CD8-positive, alpha-beta T cell (primary cell): ENCODE measurements at regions of chr2 and their contacts with region 1.

Region 1: DNA sequence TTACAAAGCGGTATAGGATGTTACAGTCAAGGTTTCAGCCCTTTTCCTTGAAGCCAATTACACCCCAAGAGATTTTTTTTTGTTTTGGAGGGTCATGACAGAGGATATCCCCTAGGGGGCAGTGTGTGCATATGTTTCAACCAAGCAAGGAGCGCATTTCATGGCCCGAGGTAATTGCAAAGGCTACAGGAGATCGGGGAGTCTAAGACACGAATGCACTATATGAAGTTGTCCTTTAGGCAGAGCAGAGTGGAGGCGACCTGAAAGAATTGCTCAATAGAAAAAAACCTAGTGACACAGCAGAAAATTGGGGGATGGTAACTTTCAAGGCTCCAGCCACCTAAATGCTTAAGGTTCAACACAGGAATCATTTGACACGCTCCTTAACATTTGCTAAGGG is 219.8 kb upstream of the PARD3B start:
- DNase-seq: peak; percentile 13 to 71 (median 45)
- ATAC-seq: peak; percentile 44
- H3K4me3 ChIP-seq: no peak overlapping the region
- H3K4me3 Mint-ChIP-seq: no peak overlapping the region
- H3K27ac ChIP-seq: no peak overlapping the region
- H3K27ac Mint-ChIP-seq: no peak overlapping the region
- H3K4me1 ChIP-seq: no peaks in the 10 kb centered on the region
- H3K4me1 Mint-ChIP-seq: peaks cover 3% of the 10 kb centered on the region
- H3K27me3 ChIP-seq: no peaks in the 10 kb centered on the region
- H3K27me3 Mint-ChIP-seq: peaks cover 8% of the 10 kb centered on the region
- CTCF ChIP-seq: peak; percentile 71

Region 2: GRCh38 chr2:204282525-204282924 is 42.9 kb before region 1 on chr2:
- CTCF ChIA-PET with region 1: no interaction called
- POLR2A ChIA-PET with region 1: no interaction called
- intact Hi-C with region 1: no loop called
- DNase-seq: no peak
- ATAC-seq: no peak
- H3K4me3 ChIP-seq: no peak overlapping the region
- H3K4me3 Mint-ChIP-seq: no peak overlapping the region
- H3K27ac ChIP-seq: no peak overlapping the region
- H3K27ac Mint-ChIP-seq: no peak overlapping the region
- H3K4me1 ChIP-seq: no peaks in the 10 kb centered on the region
- H3K4me1 Mint-ChIP-seq: no peaks in the 10 kb centered on the region
- H3K27me3 ChIP-seq: no peaks in the 10 kb centered on the region
- H3K27me3 Mint-ChIP-seq: peaks cover 12% of the 10 kb centered on the region
- CTCF ChIP-seq: no peak

Region 3: GRCh38 chr2:204715361-204715760 is 389.9 kb after region 1 on chr2:
- CTCF ChIA-PET with region 1: no interaction called
- POLR2A ChIA-PET with region 1: no interaction called
- intact Hi-C with region 1: loop called in 1 of 2 experiments (anchors 10 kb)
- DNase-seq: no peak
- ATAC-seq: no peak
- H3K4me3 ChIP-seq: no peak overlapping the region
- H3K4me3 Mint-ChIP-seq: no peak overlapping the region
- H3K27ac ChIP-seq: no peak overlapping the region
- H3K27ac Mint-ChIP-seq: no peak overlapping the region
- H3K4me1 ChIP-seq: no peaks in the 10 kb centered on the region
- H3K4me1 Mint-ChIP-seq: no peaks in the 10 kb centered on the region
- H3K27me3 ChIP-seq: no peaks in the 10 kb centered on the region
- H3K27me3 Mint-ChIP-seq: no peaks in the 10 kb centered on the region
- CTCF ChIP-seq: no peak

Region 4: GRCh38 chr2:205139822-205140463 is 814.5 kb after region 1 on chr2:
- CTCF ChIA-PET with region 1: no interaction called
- POLR2A ChIA-PET with region 1: no interaction called
- intact Hi-C with region 1: loop called in 1 of 2 experiments (anchors 10 kb)
- DNase-seq: no peak
- ATAC-seq: no peak
- H3K4me3 ChIP-seq: no peak overlapping the region
- H3K4me3 Mint-ChIP-seq: no peak overlapping the region
- H3K27ac ChIP-seq: no peak overlapping the region
- H3K27ac Mint-ChIP-seq: no peak overlapping the region
- H3K4me1 ChIP-seq: no peaks in the 10 kb centered on the region
- H3K4me1 Mint-ChIP-seq: peaks cover 5% of the 10 kb centered on the region
- H3K27me3 ChIP-seq: no peaks in the 10 kb centered on the region
- H3K27me3 Mint-ChIP-seq: no peaks in the 10 kb centered on the region
- CTCF ChIP-seq: no peak

Region 5: DNA sequence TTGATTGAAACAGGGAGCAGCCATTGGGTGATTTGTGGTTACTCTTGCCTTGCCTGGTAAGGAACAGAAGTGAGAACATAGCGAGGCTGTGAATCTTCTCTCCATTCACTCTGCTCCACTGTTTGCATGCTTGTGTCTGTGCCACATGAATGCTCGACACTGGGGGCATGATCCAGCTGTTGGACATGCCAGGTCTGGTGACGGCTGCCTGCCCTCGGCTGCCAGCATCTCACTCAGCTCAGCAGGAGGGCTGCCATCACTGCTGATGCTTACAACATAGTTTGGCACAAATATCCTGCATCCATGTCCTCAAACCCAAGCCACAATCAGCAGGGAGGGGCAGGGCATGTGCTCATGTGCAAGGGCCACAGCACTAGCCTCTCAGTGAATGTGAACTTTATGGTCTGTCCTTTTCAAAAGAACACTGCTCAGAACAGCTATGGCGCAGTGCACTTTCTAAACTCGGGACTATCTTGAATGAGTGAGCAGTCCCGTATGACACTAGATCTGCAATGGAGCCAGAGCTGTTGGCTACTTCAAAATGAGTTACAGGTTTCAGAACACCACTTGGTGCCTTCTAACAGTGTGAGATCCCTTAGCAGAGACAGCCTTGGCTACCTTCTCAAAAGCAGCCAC is 1483.1 kb after region 1 on chr2:
- CTCF ChIA-PET with region 1: no interaction called
- POLR2A ChIA-PET with region 1: no interaction called
- intact Hi-C with region 1: loop called (anchors 1 to 2 kb)
- DNase-seq: no peak
- ATAC-seq: no peak
- H3K4me3 ChIP-seq: no peak overlapping the region
- H3K4me3 Mint-ChIP-seq: no peak overlapping the region
- H3K27ac ChIP-seq: no peak overlapping the region
- H3K27ac Mint-ChIP-seq: no peak overlapping the region
- H3K4me1 ChIP-seq: no peaks in the 10 kb centered on the region
- H3K4me1 Mint-ChIP-seq: no peaks in the 10 kb centered on the region
- H3K27me3 ChIP-seq: no peaks in the 10 kb centered on the region
- H3K27me3 Mint-ChIP-seq: no peaks in the 10 kb centered on the region
- CTCF ChIP-seq: no peak

Region 6: DNA sequence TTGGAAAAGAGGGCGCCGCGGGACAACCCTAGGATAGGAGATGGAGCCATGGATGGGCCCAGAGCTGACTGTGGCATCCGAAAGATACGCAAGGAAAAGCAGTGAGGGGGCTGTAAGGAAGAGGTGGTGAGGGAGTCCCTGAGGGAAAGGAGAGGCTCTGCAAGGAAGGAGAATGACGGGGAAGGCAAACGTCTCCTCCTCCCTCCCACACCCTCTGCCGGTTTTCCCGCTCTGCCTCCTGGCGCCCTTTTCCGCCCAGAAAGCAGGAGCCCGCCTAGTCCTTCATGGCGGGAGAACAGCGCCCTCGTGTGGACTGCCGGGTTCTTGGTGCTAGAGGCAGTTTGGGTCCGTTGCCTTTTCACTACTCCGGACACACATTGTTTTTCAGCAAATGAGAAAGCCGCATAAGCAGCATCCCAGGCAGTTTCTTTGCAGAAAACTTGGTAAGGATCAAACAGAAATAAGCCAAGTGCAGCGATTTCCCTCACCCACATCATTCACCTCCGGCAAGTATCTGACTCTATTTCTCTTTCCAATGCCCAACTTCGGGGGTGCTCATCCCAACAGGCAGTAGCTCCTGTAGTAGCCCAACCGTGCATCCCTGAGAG is 1560.1 kb after region 1 on chr2:
- CTCF ChIA-PET with region 1: no interaction called
- POLR2A ChIA-PET with region 1: no interaction called
- intact Hi-C with region 1: loop called in 1 of 2 experiments (anchors 5 kb)
- DNase-seq: peak; percentile 6 to 56 (median 30)
- ATAC-seq: no peak
- H3K4me3 ChIP-seq: no peak overlapping the region
- H3K4me3 Mint-ChIP-seq: no peak overlapping the region
- H3K27ac ChIP-seq: no peak overlapping the region
- H3K27ac Mint-ChIP-seq: no peak overlapping the region
- H3K4me1 ChIP-seq: no peaks in the 10 kb centered on the region
- H3K4me1 Mint-ChIP-seq: no peaks in the 10 kb centered on the region
- H3K27me3 ChIP-seq: peaks cover 0 to 3% of the 10 kb centered on the region in 2 experiments
- H3K27me3 Mint-ChIP-seq: peaks cover 33% of the 10 kb centered on the region
- CTCF ChIP-seq: peak; percentile 47

Region 7: DNA sequence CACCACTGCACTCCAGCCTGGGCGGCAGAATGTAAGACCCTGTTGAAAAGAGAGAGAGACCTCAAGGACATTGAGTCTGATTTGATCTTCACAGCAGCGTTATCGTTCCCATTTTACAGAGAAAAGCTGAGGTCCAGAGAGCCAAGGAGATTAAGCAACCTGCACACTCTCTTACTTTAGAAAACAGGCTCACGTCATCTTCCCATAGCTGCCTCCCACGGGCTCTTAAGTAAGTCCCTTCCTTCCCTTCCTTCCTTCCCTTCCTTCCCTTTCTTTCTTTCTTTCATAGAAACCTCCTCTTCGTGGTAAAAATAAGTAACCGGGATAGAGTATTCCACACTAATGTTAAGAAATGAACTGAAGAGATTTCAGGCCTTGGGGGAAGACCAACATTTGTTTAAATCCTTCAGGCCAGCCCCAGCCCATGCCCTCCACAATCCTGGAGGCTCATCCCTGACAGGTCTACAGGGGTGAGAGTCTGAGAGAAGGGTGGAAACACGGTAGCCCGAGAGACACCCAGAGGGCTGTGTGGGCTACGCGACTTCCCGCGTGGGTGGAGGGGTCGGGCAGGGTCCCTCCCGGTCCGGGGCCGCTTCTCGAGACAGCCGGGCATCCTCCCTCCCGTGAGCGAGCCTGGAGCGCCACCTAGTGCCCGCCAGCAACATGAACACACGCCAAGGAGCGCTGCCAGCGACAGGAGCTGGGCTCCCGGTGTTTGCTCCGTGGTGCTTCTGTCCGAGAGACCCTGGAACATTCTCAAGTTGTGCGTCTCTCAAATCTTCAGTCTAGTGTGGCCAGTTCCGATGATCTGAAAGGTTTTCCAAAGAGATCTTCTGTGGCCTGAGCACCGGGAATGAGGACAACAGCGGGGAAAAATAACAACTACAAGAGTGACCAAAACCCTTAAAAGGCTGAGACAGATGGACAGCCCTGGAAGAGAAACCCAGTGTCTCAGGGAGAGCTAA is 1600.2 kb after region 1 on chr2:
- CTCF ChIA-PET with region 1: interaction called, 3 read pairs
- POLR2A ChIA-PET with region 1: no interaction called
- intact Hi-C with region 1: loop called in 1 of 2 experiments (anchors 2 kb)
- DNase-seq: peak; percentile 31 to 80 (median 66)
- ATAC-seq: peak; percentile 79
- H3K4me3 ChIP-seq: no peak overlapping the region
- H3K4me3 Mint-ChIP-seq: no peak overlapping the region
- H3K27ac ChIP-seq: no peak overlapping the region
- H3K27ac Mint-ChIP-seq: no peak overlapping the region
- H3K4me1 ChIP-seq: peaks cover 10% of the 10 kb centered on the region
- H3K4me1 Mint-ChIP-seq: peaks cover 11% of the 10 kb centered on the region
- H3K27me3 ChIP-seq: peaks cover 3 to 7% of the 10 kb centered on the region in 2 experiments
- H3K27me3 Mint-ChIP-seq: peaks cover 41% of the 10 kb centered on the region
- CTCF ChIP-seq: peak; percentile 71

Region 8: GRCh38 chr2:205947621-205948495 is 1622.4 kb after region 1 on chr2:
- CTCF ChIA-PET with region 1: interaction called, 14 read pairs
- POLR2A ChIA-PET with region 1: no interaction called
- intact Hi-C with region 1: loop called (anchors 1 kb)
- DNase-seq: peak; percentile 19 to 67 (median 52)
- ATAC-seq: peak; percentile 71
- H3K4me3 ChIP-seq: no peak overlapping the region
- H3K4me3 Mint-ChIP-seq: no peak overlapping the region
- H3K27ac ChIP-seq: no peak overlapping the region
- H3K27ac Mint-ChIP-seq: no peak overlapping the region
- H3K4me1 ChIP-seq: no peaks in the 10 kb centered on the region
- H3K4me1 Mint-ChIP-seq: peaks cover 4% of the 10 kb centered on the region
- H3K27me3 ChIP-seq: peaks cover 0 to 4% of the 10 kb centered on the region in 2 experiments
- H3K27me3 Mint-ChIP-seq: peaks cover 27% of the 10 kb centered on the region
- CTCF ChIP-seq: peak; percentile 80